ENCODE measurements at regions of chr19 and their contacts with region 1.

Region 1: GRCh38 chr19:16062789-16063188 is 13.5 kb upstream of the TPM4 start:
- DNase-seq: peak; percentile 84
- ATAC-seq: peak; percentile 38
- H3K4me3 Mint-ChIP-seq: no peak overlapping the region
- H3K27ac Mint-ChIP-seq: no peak overlapping the region
- H3K4me1 Mint-ChIP-seq: peaks cover 24% of the 10 kb centered on the region
- H3K27me3 Mint-ChIP-seq: no peaks in the 10 kb centered on the region

Region 2: GRCh38 chr19:15926484-15926883 is 136.3 kb before region 1 on chr19:
- CTCF ChIA-PET with region 1: no interaction called
- POLR2A ChIA-PET with region 1: no interaction called
- intact Hi-C with region 1: no loop called
- DNase-seq: no peak
- ATAC-seq: no peak
- H3K4me3 Mint-ChIP-seq: no peak overlapping the region
- H3K27ac Mint-ChIP-seq: no peak overlapping the region
- H3K4me1 Mint-ChIP-seq: no peaks in the 10 kb centered on the region
- H3K27me3 Mint-ChIP-seq: peaks cover 20% of the 10 kb centered on the region

Region 3: GRCh38 chr19:16051254-16052025 is 11.3 kb before region 1 on chr19:
- CTCF ChIA-PET with region 1: interaction called, 15 read pairs
- POLR2A ChIA-PET with region 1: no interaction called
- intact Hi-C with region 1: no loop called
- DNase-seq: peak; percentile 68
- ATAC-seq: peak; percentile 100
- H3K4me3 Mint-ChIP-seq: no peak overlapping the region
- H3K27ac Mint-ChIP-seq: peak overlapping the region; percentile 25
- H3K4me1 Mint-ChIP-seq: peaks cover 6% of the 10 kb centered on the region
- H3K27me3 Mint-ChIP-seq: no peaks in the 10 kb centered on the region

Region 4: DNA sequence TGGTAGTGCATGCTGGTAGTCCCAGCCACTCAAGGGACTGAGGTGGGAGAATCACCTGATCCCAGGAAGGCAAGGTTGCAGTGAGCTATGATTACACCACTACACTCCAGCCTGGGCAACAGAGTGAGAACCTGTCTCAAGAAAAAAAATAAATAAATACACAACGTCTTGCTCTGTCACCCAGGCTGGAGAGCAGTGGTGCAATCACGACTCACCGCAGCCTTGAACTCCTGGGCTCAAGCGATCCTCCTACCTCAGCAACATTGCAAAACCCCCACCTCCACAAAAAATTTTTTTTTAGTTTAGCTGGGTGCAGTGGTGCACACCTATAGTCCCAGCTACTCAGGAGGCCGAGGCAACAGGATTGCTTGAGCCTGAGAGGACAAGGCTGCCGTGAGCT is 22.3 kb after region 1 on chr19:
- CTCF ChIA-PET with region 1: interaction called, 15 read pairs
- POLR2A ChIA-PET with region 1: no interaction called
- intact Hi-C with region 1: no loop called
- DNase-seq: peak; percentile 48
- ATAC-seq: peak; percentile 23
- H3K4me3 Mint-ChIP-seq: peak overlapping the region; percentile 15
- H3K27ac Mint-ChIP-seq: peak overlapping the region; percentile 88
- H3K4me1 Mint-ChIP-seq: peaks cover 67% of the 10 kb centered on the region
- H3K27me3 Mint-ChIP-seq: no peaks in the 10 kb centered on the region